ENCODE measurements at regions of chr16 and their contacts with region 1.

Region 1: GRCh38 chr16:48561960-48562393 is 48.0 kb downstream of the N4BP1 start:
- DNase-seq: no peak
- ATAC-seq: no peak
- H3K4me3 ChIP-seq: no peak overlapping the region
- H3K27ac ChIP-seq: no peak overlapping the region
- H3K4me1 ChIP-seq: peaks cover 3% of the 10 kb centered on the region; the same call in 1 of the 2 replicates
- H3K27me3 ChIP-seq: no peaks in the 10 kb centered on the region
- CTCF ChIP-seq: no peak
- EP300 ChIP-seq: no peak
- POLR2A ChIP-seq: no peak
- RAD21 ChIP-seq: no peak

Region 2: DNA sequence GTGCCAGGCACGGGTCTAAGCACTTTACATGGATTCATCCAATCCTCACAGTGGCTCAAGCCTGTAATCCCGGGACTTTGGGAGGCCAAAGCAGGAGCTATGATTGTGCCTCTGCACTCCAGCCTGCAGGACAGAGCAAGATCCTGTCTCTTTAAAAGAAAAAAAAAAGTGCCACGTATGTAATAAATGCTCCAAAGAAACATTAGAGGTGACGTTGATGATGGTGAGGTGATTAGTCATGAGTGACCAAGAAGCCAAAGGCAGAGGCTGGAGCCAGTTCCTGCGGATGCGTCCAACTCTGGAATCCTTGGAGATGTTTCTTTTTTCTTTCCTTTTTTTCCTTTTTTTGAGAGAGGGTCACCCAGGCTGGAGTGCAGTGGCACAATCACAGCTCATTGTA is 117.4 kb before region 1 on chr16:
- CTCF ChIA-PET with region 1: no interaction called
- POLR2A ChIA-PET with region 1: no interaction called
- RAD21 ChIA-PET with region 1: no interaction called
- SMC1A ChIA-PET with region 1: no interaction called
- in situ Hi-C with region 1: no loop called
- intact Hi-C with region 1: no loop called
- DNase-seq: no peak
- ATAC-seq: no peak
- H3K4me3 ChIP-seq: no peak overlapping the region
- H3K27ac ChIP-seq: no peak overlapping the region
- H3K4me1 ChIP-seq: no peaks in the 10 kb centered on the region
- H3K27me3 ChIP-seq: no peaks in the 10 kb centered on the region
- CTCF ChIP-seq: no peak
- EP300 ChIP-seq: no peak
- POLR2A ChIP-seq: no peak
- RAD21 ChIP-seq: no peak

Region 3: DNA sequence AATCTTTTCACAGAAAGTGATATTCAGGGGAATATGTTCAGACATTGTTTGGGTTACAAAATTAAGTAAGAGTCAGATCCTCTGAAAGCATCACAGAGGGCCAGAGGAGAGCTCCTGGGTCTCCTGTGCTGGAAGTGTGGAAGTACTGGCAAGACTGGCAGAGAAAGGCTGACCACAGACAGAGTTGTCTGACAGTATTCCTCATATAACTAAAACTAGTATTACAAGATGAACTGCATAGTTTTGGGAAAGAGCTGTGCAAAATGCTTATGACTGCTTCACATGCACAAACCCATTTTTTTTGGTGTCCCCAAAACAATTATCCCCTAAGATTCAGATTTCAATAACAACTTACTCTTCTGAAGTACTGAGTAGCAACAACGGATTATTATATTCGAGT is 12.8 kb after region 1 on chr16:
- CTCF ChIA-PET with region 1: interaction called, 5 read pairs
- POLR2A ChIA-PET with region 1: no interaction called
- RAD21 ChIA-PET with region 1: no interaction called
- SMC1A ChIA-PET with region 1: interaction called, 11 read pairs
- in situ Hi-C with region 1: no loop called
- intact Hi-C with region 1: no loop called
- DNase-seq: no peak
- ATAC-seq: no peak
- H3K4me3 ChIP-seq: no peak overlapping the region
- H3K27ac ChIP-seq: no peak overlapping the region
- H3K4me1 ChIP-seq: peaks cover 1% of the 10 kb centered on the region; the same call in 1 of the 2 replicates
- H3K27me3 ChIP-seq: no peaks in the 10 kb centered on the region
- CTCF ChIP-seq: no peak
- EP300 ChIP-seq: no peak
- POLR2A ChIP-seq: no peak
- RAD21 ChIP-seq: no peak

Region 4: GRCh38 chr16:48901712-48902374 is 339.9 kb after region 1 on chr16:
- CTCF ChIA-PET with region 1: no interaction called
- POLR2A ChIA-PET with region 1: no interaction called
- RAD21 ChIA-PET with region 1: no interaction called
- SMC1A ChIA-PET with region 1: no interaction called
- in situ Hi-C with region 1: no loop called
- intact Hi-C with region 1: no loop called
- DNase-seq: no peak
- ATAC-seq: peak; percentile 50
- H3K4me3 ChIP-seq: no peak overlapping the region
- H3K27ac ChIP-seq: no peak overlapping the region
- H3K4me1 ChIP-seq: peaks cover 20% of the 10 kb centered on the region
- H3K27me3 ChIP-seq: no peaks in the 10 kb centered on the region; a peak in 1 of 4 replicates
- CTCF ChIP-seq: no peak
- EP300 ChIP-seq: no peak
- POLR2A ChIP-seq: no peak
- RAD21 ChIP-seq: no peak